Activated T-helper 1 cell treated with anti-CD3 and anti-CD28 coated beads, Interleukin-12 subunit alpha, Interleukin-12 subunit beta, Interleukin-2, Interleukin-4 antibody, amounts not matched to agents 30 ng/mL and 10 ng/mL and 1 ng/mL, durations not matched to agents 14 hours and 24 hours and 36 hours (primary cell): ENCODE measurements at regions of chr4 and their contacts with region 1.

Region 1: DNA sequence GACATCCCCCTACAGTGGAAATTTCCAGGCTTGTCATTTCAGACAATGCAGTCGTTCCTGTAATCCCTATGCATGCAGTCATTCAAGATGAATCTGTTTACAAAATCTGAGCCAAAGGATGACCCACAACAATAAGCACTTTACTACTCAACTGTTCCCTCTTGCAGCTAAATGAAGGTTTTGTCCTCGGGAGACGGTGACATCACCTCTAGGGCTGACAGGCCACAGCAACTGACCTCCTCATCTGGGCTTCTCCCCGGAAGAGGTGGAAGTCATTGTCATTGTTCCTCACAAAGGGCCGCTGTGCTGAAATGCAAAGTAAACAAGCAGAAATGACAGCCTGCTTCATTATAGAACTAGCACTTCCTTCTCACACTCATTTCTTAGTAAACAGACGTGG is 29.2 kb downstream of the CLRN2 start:
- DNase-seq: no peak
- H3K4me3 Mint-ChIP-seq: no peak overlapping the region
- H3K27ac Mint-ChIP-seq: no peak overlapping the region
- H3K4me1 Mint-ChIP-seq: peaks cover 6% of the 10 kb centered on the region
- H3K27me3 Mint-ChIP-seq: peaks cover 10% of the 10 kb centered on the region

Region 2: DNA sequence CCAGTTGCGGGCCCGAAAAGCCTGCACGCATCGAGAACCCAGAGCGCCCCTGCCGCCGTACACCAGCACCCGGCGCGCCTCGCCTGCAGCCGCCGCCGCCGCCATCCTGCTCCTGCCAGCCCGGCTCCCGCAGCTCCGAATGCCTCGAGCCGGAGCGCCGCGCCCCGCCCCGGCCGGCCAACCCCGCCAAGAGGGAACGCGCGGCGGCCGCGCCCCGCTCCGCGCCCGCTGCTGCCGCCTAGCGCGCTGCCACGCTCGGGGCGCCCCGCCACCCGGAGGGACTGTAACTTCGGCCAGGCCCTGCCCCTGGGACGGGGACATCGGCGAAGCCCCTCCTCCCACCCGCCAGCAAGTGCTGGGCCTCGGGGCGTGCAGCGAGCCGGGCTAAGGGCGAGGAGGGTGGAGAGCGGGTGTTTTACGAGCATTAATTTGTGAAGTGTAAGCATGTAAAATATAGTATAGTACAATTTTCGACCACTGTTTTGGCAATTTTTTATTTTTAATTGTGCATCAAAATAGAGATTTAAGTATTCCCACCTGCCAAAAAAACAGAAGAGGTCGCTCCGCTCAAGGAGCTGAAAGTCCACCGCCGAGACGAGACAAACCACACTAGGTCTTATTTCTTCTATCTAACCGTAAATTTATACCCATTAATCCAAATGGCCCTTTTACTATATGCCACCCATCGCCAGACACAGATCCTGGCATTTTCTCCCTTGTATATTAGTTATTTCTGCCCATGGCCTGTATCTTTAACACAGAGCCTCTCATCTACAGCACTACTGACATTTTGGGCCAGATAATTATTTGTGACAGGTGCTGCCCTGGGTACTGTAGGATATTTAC is 32.0 kb before region 1 on chr4 and contains the start of gene QDPR:
- intact Hi-C with region 1: loop called (anchors 2 kb)
- DNase-seq: peak; percentile 69
- H3K4me3 Mint-ChIP-seq: peak within 1 kb of the TSS; percentile 98
- H3K27ac Mint-ChIP-seq: peak within 1 kb of the TSS; percentile 92
- H3K4me1 Mint-ChIP-seq: peaks cover 15% of the 10 kb centered on the region
- H3K27me3 Mint-ChIP-seq: peaks cover 19% of the 10 kb centered on the region
- total RNA-seq, gene QDPR: 28.7 and 29.7 TPM in 2 replicates

Region 3: GRCh38 chr4:17576932-17577665 is 32.9 kb after region 1 on chr4 and contains the start of gene LAP3:
- intact Hi-C with region 1: loop called (anchors 1 kb)
- DNase-seq: peak; percentile 98
- H3K4me3 Mint-ChIP-seq: peak within 1 kb of the TSS; percentile 93
- H3K27ac Mint-ChIP-seq: peak within 1 kb of the TSS; percentile 94
- H3K4me1 Mint-ChIP-seq: peaks cover 38% of the 10 kb centered on the region
- H3K27me3 Mint-ChIP-seq: no peaks in the 10 kb centered on the region
- total RNA-seq, gene LAP3: 108 and 109 TPM in 2 replicates

Region 4: DNA sequence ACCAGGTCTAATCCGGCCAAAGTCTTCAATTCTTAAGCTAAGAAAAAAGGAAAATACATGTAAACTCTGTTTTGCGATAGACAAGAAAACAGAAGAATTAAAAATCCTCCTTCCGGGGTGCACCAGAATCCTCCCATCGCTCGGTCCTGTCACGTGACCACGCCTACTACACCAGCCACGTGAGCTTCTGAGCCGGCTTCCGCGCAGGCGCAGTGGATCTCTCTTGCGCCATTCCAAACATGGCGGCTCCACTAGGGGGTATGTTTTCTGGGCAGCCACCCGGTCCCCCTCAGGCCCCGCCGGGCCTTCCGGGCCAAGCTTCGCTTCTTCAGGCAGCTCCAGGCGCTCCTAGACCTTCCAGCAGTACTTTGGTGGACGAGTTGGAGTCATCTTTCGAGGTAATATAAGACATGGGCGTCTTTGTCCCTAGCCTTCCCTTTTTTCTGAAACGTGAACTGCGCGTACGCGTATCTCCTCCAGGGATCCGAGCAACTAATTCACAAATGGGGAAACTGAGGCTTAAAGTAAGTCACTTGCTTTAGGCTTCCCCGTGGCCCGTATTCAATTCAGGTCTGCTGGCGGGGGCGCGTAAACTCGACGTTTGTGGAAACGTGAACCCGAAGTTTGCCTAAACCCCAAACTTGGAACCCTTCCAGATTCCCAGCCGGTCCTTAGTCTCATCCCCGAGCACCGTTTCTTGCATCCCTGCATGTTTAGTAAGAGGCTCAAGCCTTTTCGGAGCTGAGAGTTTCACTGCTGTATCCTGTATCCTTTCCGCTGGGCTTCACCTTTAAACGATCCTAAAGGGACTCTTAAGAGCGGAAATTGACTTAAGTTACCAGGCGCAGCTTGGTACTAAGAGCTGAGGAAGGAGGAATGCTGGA is 70.5 kb after region 1 on chr4 and contains the start of gene MED28:
- intact Hi-C with region 1: loop called (anchors 1 kb)
- DNase-seq: peak; percentile 93
- H3K4me3 Mint-ChIP-seq: peak within 1 kb of the TSS; percentile 96
- H3K27ac Mint-ChIP-seq: peak within 1 kb of the TSS; percentile 97
- H3K4me1 Mint-ChIP-seq: peaks cover 32% of the 10 kb centered on the region
- H3K27me3 Mint-ChIP-seq: peaks cover 2% of the 10 kb centered on the region
- total RNA-seq, gene MED28: 46.6 and 49.6 TPM in 2 replicates

Region 5: GRCh38 chr4:17636696-17637622 is 92.8 kb after region 1 on chr4:
- intact Hi-C with region 1: loop called (anchors 1 kb)
- DNase-seq: peak; percentile 48
- H3K4me3 Mint-ChIP-seq: no peak overlapping the region
- H3K27ac Mint-ChIP-seq: no peak overlapping the region
- H3K4me1 Mint-ChIP-seq: no peaks in the 10 kb centered on the region
- H3K27me3 Mint-ChIP-seq: no peaks in the 10 kb centered on the region

Region 6: GRCh38 chr4:18366892-18367291 is 822.7 kb after region 1 on chr4:
- intact Hi-C with region 1: loop called (anchors 1 kb)
- DNase-seq: no peak
- H3K4me3 Mint-ChIP-seq: no peak overlapping the region
- H3K27ac Mint-ChIP-seq: no peak overlapping the region
- H3K4me1 Mint-ChIP-seq: no peaks in the 10 kb centered on the region
- H3K27me3 Mint-ChIP-seq: peaks cover 6% of the 10 kb centered on the region

Region 7: GRCh38 chr4:18593445-18594002 is 1049.3 kb after region 1 on chr4:
- intact Hi-C with region 1: loop called (anchors 1 kb)
- DNase-seq: peak; percentile 14
- H3K4me3 Mint-ChIP-seq: no peak overlapping the region
- H3K27ac Mint-ChIP-seq: no peak overlapping the region
- H3K4me1 Mint-ChIP-seq: peaks cover 8% of the 10 kb centered on the region
- H3K27me3 Mint-ChIP-seq: no peaks in the 10 kb centered on the region